GM23248 (cell line): ENCODE measurements at regions of chr20 and their contacts with region 1.

Region 1: DNA sequence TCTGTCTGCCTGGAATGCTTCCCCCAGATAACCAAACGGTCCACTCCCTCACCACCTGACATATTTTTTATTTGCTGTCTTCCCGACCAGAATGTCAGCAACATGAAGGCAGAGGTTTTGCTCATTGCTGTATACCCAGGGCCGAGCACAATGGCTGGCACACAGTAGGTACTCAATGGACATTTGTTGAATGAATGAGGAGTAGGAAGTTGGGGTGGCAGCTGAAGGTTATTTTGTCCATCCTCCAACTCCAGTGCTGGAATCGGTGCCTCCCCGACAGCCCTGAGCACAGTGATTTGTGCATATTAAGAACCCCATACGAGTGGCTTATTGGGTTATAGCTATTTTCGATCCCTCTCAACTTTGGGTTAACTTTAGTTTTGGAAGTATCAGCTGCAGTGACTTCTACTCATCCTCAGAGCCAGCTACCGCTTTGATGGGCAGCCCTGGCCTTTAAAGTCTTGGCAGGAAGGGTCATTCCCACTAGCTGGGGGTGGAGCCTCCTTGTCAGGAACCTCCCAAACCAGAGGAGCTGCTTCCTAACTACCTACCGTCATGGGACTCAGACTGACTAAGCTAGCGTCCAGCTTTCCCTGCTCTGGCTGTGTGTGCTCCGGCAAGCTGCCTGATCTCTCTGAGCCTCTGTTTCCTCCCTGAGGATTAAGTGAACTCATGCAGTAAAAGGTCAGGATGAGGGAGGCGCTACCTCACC is 10.2 kb downstream of the DUSP15 start:
- DNase-seq: peak; percentile 64
- H3K4me3 ChIP-seq: no peak overlapping the region
- H3K27ac ChIP-seq: no peak overlapping the region
- H3K4me1 ChIP-seq: 0 out of 2 replicates have a peak, but pooled peaks cover 3% of the 10 kb centered on the region
- H3K27me3 ChIP-seq: peaks cover 68% of the 10 kb centered on the region

Region 2: DNA sequence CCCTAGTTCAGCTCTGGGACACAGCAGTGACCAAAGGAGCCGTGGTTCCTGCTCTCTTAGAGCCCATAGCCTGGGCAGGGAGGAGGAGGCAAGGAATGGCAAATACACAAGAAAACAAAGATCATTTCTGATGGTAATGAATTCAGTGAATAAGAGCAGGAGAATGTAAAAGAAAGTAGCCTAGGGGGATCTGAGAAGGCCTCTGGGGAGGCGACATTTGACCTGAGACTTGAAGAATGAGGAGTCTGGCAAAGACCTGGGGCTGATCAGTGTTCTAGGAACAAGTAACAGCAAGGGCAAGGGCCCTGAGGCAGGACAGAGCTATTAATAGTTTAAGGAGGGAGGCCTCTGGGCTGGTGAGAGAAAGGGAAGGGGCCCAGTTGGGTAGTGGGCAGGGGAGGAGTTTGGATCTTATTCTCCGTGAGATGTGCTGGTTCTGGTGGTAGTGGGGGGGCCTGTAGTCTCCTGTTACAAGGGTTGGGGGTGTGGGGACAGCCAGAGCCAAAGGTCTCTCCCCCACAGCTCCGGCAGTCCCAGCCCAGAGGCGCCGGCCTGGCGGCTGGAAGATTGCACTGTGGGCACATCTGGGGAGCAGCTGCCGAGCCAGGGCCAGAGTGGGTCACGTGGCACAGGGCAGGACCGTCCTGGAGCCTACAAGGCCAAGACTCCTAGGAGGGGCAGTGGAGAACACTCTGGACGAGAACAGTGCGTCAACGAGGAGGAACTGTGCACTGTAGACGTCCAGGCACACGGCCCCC is 264.3 kb before region 1 on chr20:
- in situ Hi-C with region 1: no loop called
- DNase-seq: peak; percentile 99
- H3K4me3 ChIP-seq: 0 out of 2 replicates have a peak overlapping the region, but pooled peaks have one; percentile 1
- H3K27ac ChIP-seq: peak overlapping the region; percentile 96
- H3K4me1 ChIP-seq: peaks cover 34% of the 10 kb centered on the region
- H3K27me3 ChIP-seq: no peaks in the 10 kb centered on the region

Region 3: DNA sequence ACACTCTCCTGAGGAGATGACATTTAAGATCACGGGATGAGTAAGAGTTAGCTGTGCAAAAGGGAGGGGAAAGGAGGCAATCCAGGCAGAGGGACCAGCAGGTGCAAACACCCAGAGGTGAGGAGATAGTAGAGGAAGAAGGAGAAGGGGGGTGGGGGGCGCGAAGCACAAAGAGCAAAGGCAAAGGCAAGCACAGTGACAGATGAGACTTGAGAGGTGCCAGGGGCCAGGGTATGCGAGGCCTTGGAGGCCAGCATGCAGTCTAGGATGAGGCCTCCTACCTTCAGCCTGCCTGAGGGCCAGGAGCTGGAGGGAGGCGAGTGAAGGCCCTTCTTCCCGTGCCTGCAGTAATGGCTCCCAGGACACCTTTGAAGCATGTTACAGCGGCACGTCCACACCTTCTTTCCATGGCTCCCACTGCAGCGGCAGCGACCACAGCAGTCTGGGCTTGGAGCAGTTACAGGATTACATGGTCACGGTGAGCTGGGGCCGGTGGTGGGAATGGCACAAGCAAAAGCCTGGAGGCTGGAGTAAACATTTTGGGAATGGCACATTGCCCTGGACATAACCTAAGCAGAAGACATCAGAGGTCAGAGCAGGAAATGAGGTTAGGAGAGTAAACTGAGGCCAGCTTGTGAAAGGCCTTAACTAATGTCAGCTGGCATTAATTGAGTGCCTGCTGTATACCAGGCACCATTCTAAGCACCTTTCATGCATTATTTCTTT is 168.7 kb after region 1 on chr20:
- in situ Hi-C with region 1: loop called (anchors 10 kb)
- DNase-seq: no peak
- H3K4me3 ChIP-seq: no peak overlapping the region
- H3K27ac ChIP-seq: no peak overlapping the region
- H3K4me1 ChIP-seq: no peaks in the 10 kb centered on the region
- H3K27me3 ChIP-seq: peaks cover 54% of the 10 kb centered on the region

Region 4: GRCh38 chr20:32079655-32080109 is 219.5 kb after region 1 on chr20:
- in situ Hi-C with region 1: loop called (anchors 10 kb)
- DNase-seq: no peak
- H3K4me3 ChIP-seq: no peak overlapping the region
- H3K27ac ChIP-seq: no peak overlapping the region
- H3K4me1 ChIP-seq: no peaks in the 10 kb centered on the region
- H3K27me3 ChIP-seq: peaks cover 64% of the 10 kb centered on the region

Region 5: GRCh38 chr20:32858701-32859372 is 998.7 kb after region 1 on chr20 and contains the start of gene EFCAB8:
- in situ Hi-C with region 1: no loop called
- DNase-seq: no peak
- H3K4me3 ChIP-seq: no peak within 1 kb of the TSS
- H3K27ac ChIP-seq: no peak within 1 kb of the TSS
- H3K4me1 ChIP-seq: no peaks in the 10 kb centered on the region
- H3K27me3 ChIP-seq: no peaks in the 10 kb centered on the region
- total RNA-seq, gene EFCAB8: 0.13 TPM in 1 of 2 replicates, not detected in the other